SK-N-SH (cell line): ENCODE measurements at regions of chr11 and their contacts with region 1.

Region 1: DNA sequence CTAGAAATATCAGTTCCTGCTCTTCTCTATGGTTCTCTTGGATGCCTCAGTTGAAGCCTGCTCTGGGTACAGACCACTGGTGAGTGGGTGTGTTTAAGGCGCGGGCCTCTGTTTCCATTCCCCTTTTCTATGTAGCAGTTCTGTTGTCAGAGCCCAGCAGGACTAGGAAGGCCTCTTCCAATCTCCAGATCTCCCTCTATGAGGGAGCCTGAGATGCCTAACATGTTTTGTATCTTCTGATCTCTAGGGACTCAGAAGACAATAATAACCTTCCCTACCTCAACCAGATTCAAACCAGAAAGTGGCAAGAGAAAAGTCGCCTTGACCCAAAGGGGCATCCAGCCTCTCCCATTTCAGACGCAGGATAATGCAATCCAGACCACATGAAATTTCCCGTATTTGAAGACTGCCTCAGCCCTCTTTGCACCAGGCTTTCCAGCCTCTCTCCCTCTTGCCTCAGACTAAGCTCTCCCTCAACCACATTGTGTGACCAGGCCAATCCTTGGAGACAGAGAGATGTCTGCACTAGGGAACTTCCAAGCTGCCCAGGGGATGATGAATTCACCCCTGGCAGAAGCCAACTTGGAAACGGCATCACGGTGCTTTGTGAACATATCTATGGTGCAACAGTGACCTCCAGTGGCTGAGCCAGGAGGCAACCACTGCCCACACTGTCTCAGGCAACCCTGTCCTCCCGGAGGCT is 150.1 kb upstream of the UBASH3B start:
- DNase-seq: peak; percentile 82
- H3K4me3 ChIP-seq: no peak overlapping the region
- H3K27ac ChIP-seq: peak overlapping the region in 1 of 2 experiments; percentile 84; a peak in 3 of 4 replicates
- H3K4me1 ChIP-seq: peaks cover 0 to 6% of the 10 kb centered on the region in 2 experiments; a peak in 2 of 4 replicates
- H3K27me3 ChIP-seq: peaks cover 7% of the 10 kb centered on the region; the same call in 1 of the 2 replicates
- CTCF ChIP-seq: peak; percentile 89
- EP300 ChIP-seq: no peak
- RAD21 ChIP-seq: peak; percentile 98

Region 2: DNA sequence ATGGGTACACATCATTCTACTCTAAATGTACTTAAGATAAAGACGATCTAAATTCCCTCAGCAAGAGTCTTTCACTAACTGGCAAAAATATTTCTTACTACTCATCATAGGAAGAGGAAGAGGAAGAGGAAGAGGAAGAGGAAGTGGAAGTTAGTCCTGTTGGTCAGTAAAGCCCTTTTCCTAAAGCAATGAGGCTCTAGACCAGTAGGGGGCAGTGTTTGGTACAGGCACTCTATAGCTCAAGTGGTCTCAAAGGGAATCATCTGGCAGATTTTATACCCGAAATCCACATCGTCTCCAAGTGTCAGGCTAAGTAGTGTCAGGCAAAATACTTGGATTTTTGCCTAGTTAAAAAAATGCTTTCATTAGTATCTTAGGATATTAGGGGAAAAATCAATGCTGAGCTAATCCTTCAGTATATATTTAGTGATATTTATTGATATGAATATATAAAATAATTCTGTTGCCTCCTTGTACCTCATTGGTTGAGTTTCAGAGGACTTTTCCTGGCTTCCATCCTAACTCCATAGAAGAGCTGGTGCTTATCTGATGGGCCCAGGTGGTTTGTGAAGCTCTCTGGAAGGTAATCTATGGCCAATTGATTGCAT is 397.2 kb before region 1 on chr11:
- CTCF ChIA-PET with region 1: interaction called, 17 read pairs
- POLR2A ChIA-PET with region 1: no interaction called
- DNase-seq: no peak
- H3K4me3 ChIP-seq: no peak overlapping the region; a peak in 1 of 4 replicates
- H3K27ac ChIP-seq: peak overlapping the region in 1 of 2 experiments; percentile 94; a peak in 2 of 4 replicates
- H3K4me1 ChIP-seq: peaks cover 8 to 70% of the 10 kb centered on the region in 2 experiments
- H3K27me3 ChIP-seq: no peaks in the 10 kb centered on the region
- CTCF ChIP-seq: peak; percentile 85
- EP300 ChIP-seq: no peak
- RAD21 ChIP-seq: peak; percentile 50

Region 3: GRCh38 chr11:122215244-122215992 is 290.0 kb before region 1 on chr11:
- CTCF ChIA-PET with region 1: interaction called, 136 read pairs
- POLR2A ChIA-PET with region 1: interaction called, 3 read pairs
- DNase-seq: peak; percentile 88
- H3K4me3 ChIP-seq: no peak overlapping the region
- H3K27ac ChIP-seq: peak overlapping the region; percentile 53 to 94
- H3K4me1 ChIP-seq: peaks cover 3 to 11% of the 10 kb centered on the region in 2 experiments
- H3K27me3 ChIP-seq: no peaks in the 10 kb centered on the region
- CTCF ChIP-seq: peak; percentile 95
- EP300 ChIP-seq: peak; percentile 62 to 95; a peak in 3 of 4 replicates
- RAD21 ChIP-seq: peak; percentile 88

Region 4: DNA sequence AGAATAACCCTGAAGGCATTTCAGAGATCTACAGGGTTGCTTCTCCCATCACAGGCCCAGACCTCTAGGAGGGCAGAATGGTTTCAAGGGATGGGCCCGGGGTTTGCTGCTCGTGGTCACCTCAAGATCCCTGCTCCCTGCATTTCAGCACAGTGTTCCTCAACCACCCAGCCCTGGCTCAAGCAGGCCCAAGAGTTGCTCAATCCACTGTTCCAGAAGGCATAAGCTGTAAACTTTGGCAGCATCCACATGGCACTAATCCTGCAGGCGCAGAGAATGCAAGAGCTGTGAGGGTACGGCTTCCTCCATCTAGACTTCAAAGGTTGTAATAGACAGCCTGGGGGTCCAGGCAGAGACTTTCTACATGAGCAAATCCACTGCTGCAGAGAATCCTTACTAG is 75.0 kb before region 1 on chr11:
- CTCF ChIA-PET with region 1: no interaction called
- POLR2A ChIA-PET with region 1: no interaction called
- DNase-seq: no peak
- H3K4me3 ChIP-seq: no peak overlapping the region
- H3K27ac ChIP-seq: no peak overlapping the region
- H3K4me1 ChIP-seq: no peaks in the 10 kb centered on the region
- H3K27me3 ChIP-seq: no peaks in the 10 kb centered on the region
- CTCF ChIP-seq: no peak
- EP300 ChIP-seq: no peak
- RAD21 ChIP-seq: no peak

Region 5: DNA sequence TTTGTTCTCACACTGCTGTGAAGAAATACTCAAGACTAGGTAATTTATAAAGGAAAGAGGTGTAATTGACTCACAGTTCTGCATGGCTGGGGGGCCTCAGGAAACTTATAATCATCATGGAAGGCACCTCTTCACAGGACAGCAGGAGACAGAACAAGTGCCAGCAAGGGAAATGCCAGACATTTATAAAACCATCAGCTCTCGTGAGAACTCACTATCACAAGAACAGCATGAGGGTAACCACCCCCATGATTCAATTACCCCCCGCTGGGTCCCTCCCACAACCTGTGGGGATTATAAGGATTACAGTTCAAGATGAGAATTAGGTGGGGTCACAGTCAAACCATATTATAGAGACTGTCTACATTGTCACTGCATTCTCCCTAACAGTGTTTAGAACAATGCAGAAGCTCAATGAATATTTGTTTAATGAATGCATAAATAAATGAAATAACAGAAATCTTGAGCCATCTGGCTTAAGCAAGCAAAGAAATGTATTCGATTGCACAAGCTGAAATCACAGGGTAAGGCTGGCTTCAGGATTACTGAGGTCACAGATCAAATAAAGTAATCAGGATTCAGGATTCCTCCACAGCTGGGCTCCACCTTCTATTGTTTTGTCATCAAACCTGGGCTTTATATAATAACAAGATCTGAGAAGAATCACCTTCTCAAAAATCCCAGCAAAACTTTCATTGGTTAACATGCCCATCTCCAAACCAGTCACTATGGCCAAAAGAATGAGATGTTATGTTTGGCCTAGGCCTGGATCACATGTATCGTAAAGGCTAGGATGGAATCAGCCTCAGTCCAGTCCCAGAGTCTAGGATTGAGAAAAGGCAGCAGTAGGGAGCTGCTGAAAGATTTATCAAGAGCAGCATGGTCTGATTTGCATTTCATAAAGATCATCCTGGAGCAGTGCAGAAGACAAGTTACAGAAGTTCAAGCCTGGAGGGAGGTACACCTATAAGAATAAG is 12.2 kb after region 1 on chr11:
- CTCF ChIA-PET with region 1: interaction called, 30 read pairs
- POLR2A ChIA-PET with region 1: no interaction called
- DNase-seq: no peak
- H3K4me3 ChIP-seq: no peak overlapping the region
- H3K27ac ChIP-seq: peak overlapping the region in 1 of 2 experiments; percentile 93; a peak in 2 of 4 replicates
- H3K4me1 ChIP-seq: peaks cover 5 to 18% of the 10 kb centered on the region in 2 experiments; a peak in 3 of 4 replicates
- H3K27me3 ChIP-seq: peaks cover 8% of the 10 kb centered on the region; the same call in 1 of the 2 replicates
- CTCF ChIP-seq: no peak
- EP300 ChIP-seq: no peak
- RAD21 ChIP-seq: no peak

Region 6: DNA sequence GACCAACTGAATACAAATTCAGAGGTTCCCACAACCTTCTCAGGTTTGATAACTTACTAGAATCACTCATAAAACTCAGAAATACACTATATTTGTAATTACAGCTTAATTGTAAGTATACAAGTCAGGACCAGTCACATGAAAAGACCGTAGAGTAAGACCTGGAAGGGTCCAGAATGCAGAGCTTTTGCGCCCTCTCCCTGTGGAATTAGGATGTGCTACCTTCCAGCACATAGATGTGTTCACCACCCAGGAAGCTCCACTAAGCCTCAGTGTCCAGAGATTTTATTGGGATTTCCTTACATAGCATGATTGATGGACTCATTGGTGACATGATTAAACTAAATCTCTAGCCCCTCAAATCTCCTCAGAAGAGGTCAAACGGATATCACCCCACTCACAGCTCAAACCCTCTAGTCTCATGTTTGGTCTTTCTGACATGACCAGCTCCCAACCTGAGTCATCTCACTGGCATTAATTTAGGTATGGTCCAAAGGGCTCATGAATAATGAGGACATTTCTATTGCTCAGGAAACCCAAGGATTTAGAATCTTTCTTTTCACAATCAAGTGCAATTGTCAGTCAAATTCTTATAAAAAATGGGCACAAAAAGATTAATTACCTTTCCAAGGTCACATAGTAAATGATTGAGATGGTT is 72.8 kb after region 1 on chr11:
- CTCF ChIA-PET with region 1: interaction called, 11 read pairs
- POLR2A ChIA-PET with region 1: no interaction called
- DNase-seq: no peak
- H3K4me3 ChIP-seq: no peak overlapping the region
- H3K27ac ChIP-seq: no peak overlapping the region
- H3K4me1 ChIP-seq: peaks cover 0 to 2% of the 10 kb centered on the region in 2 experiments; a peak in 1 of 4 replicates
- H3K27me3 ChIP-seq: no peaks in the 10 kb centered on the region
- CTCF ChIP-seq: peak; percentile 36
- EP300 ChIP-seq: no peak
- RAD21 ChIP-seq: peak; percentile 34

Region 7: GRCh38 chr11:122910775-122911174 is 405.3 kb after region 1 on chr11:
- CTCF ChIA-PET with region 1: no interaction called
- POLR2A ChIA-PET with region 1: no interaction called
- DNase-seq: peak; percentile 30
- H3K4me3 ChIP-seq: no peak overlapping the region
- H3K27ac ChIP-seq: no peak overlapping the region
- H3K4me1 ChIP-seq: no peaks in the 10 kb centered on the region
- H3K27me3 ChIP-seq: no peaks in the 10 kb centered on the region
- CTCF ChIP-seq: peak; percentile 58
- EP300 ChIP-seq: no peak
- RAD21 ChIP-seq: peak; percentile 89